ENCODE measurements at regions of chr20 and their contacts with region 1.

Region 1: DNA sequence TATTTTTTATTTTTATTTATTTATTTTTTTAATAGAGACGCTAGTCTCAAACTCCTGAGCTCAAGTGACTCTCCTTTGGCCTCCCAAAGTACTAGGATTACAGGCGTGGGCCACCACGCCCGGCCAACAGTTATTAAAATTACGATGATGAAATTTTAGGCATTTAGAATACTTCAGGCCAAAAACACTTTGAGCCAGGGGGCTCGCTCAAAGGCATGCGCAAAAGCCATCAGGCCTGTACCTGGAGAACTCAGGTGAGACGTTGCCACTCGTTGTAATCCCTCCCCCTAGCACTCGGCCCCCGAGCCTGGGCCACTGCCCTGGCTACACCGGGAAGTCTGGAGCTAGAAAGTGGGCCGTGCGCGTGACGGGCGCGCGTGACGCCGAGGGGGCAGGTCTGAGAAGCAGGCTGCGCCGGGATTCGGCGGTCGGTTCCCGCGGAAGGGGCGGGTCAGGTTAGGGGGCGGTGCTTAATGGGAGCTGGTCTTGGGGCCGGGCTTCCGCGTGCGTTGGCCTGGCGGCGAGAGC is 337 bp upstream of the CBFA2T2 start:
- DNase-seq: peak; percentile 99
- ATAC-seq: peak; percentile 97
- H3K4me3 ChIP-seq: peak overlapping the region; percentile 24 to 73 (median 68)
- H3K4me3 Mint-ChIP-seq: peak overlapping the region; percentile 93
- H3K27ac ChIP-seq: peak overlapping the region; percentile 97 to 99
- H3K27ac Mint-ChIP-seq: peak overlapping the region; percentile 95
- H3K4me1 ChIP-seq: peaks cover 9 to 19% of the 10 kb centered on the region in 2 donors
- H3K4me1 Mint-ChIP-seq: peaks cover 16% of the 10 kb centered on the region
- H3K27me3 ChIP-seq: no peaks in the 10 kb centered on the region
- H3K27me3 Mint-ChIP-seq: no peaks in the 10 kb centered on the region
- CTCF ChIP-seq: no peak

Region 2: GRCh38 chr20:33408716-33409654 is 80.6 kb before region 1 on chr20:
- CTCF ChIA-PET with region 1: no interaction called
- POLR2A ChIA-PET with region 1: interaction called, 3 read pairs
- intact Hi-C with region 1: loop called (anchors 1 kb)
- DNase-seq: peak; percentile 83
- ATAC-seq: peak; percentile 90
- H3K4me3 ChIP-seq: peak overlapping the region in 3 of 5 experiments; percentile 25 to 35 (median 29)
- H3K4me3 Mint-ChIP-seq: peak overlapping the region; percentile 81
- H3K27ac ChIP-seq: peak overlapping the region; percentile 57 to 75
- H3K27ac Mint-ChIP-seq: peak overlapping the region; percentile 96
- H3K4me1 ChIP-seq: peaks cover 26 to 43% of the 10 kb centered on the region in 2 donors
- H3K4me1 Mint-ChIP-seq: peaks cover 46% of the 10 kb centered on the region
- H3K27me3 ChIP-seq: no peaks in the 10 kb centered on the region
- H3K27me3 Mint-ChIP-seq: no peaks in the 10 kb centered on the region
- CTCF ChIP-seq: no peak

Region 3: DNA sequence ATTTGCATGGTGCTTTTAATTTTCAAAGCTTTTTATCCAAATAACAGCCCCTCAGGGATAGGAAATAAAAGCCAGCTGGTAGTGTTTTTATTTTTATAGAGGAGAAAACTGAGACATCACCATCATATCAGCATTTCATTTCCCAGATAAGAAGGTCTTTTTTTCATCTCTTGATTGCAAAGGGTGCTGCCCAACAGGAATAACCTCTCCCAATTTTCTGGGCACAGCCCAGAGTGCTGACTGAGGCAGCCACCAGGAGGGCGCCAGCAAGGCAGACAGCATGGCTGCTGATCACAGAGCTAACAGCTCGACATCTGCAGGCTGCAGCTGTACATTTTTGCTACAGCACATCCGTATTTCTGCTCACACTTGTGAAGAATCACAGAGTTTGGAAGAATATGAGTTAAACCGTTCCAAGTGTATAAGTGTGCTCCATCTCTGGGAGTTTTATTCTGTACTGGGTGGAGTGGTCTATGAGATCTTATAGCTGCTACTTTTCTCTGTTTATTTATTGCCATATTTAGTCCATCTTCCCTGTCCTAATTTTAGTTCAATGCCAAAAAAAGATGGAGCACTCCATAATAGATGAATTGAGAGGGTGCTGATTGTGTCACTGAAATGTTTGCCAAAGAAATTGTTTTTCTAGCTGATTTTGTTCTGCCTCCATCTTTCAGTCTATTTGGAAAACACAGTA is 87.0 kb after region 1 on chr20:
- CTCF ChIA-PET with region 1: interaction called, 3 read pairs
- POLR2A ChIA-PET with region 1: interaction called, 13 read pairs
- intact Hi-C with region 1: no loop called
- DNase-seq: no peak
- ATAC-seq: no peak
- H3K4me3 ChIP-seq: no peak overlapping the region
- H3K4me3 Mint-ChIP-seq: no peak overlapping the region
- H3K27ac ChIP-seq: no peak overlapping the region
- H3K27ac Mint-ChIP-seq: no peak overlapping the region
- H3K4me1 ChIP-seq: peaks cover 6 to 11% of the 10 kb centered on the region in 2 donors
- H3K4me1 Mint-ChIP-seq: peaks cover 25% of the 10 kb centered on the region
- H3K27me3 ChIP-seq: no peaks in the 10 kb centered on the region
- H3K27me3 Mint-ChIP-seq: no peaks in the 10 kb centered on the region
- CTCF ChIP-seq: no peak

Region 4: DNA sequence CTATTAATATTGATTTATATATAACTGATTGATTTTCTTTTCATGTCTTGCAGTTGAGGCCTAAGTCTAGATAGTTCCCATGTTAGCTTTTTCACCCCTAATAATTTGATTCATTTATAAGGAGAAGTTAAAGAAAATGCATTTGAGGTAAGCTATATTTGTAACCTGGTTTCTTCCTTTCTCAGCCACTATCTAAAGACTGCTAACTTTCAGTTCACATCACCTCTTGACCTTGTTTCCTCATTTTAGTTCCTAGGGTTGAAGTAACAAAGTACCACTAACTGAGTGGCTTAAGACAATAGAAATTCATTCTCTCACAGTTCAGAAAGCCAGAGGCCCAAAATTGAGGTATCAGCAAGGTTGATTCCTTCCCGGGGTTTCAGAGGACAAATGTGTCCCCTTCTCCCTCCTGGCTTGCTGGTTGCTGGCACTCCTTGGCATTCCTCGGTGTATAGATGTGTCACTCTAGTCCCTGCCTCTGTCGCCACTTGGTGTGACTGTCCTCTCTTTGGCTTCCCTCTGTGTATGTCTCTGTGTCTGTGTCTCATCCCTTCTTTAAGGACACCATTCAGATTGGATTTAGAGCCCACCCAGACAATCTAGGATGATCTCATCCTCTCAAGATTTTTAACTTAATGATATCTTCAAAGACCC is 116.7 kb after region 1 on chr20:
- CTCF ChIA-PET with region 1: no interaction called
- POLR2A ChIA-PET with region 1: no interaction called
- intact Hi-C with region 1: loop called (anchors 10 kb)
- DNase-seq: peak; percentile 63
- ATAC-seq: peak; percentile 53
- H3K4me3 ChIP-seq: no peak overlapping the region
- H3K4me3 Mint-ChIP-seq: peak overlapping the region; percentile 62
- H3K27ac ChIP-seq: peak overlapping the region; percentile 56 to 88
- H3K27ac Mint-ChIP-seq: peak overlapping the region; percentile 92
- H3K4me1 ChIP-seq: peaks cover 72 to 82% of the 10 kb centered on the region in 2 donors
- H3K4me1 Mint-ChIP-seq: peaks cover 74% of the 10 kb centered on the region
- H3K27me3 ChIP-seq: no peaks in the 10 kb centered on the region
- H3K27me3 Mint-ChIP-seq: no peaks in the 10 kb centered on the region
- CTCF ChIP-seq: no peak

Region 5: GRCh38 chr20:33711446-33711738 is 221.8 kb after region 1 on chr20:
- CTCF ChIA-PET with region 1: no interaction called
- POLR2A ChIA-PET with region 1: no interaction called
- intact Hi-C with region 1: no loop called
- DNase-seq: no peak
- ATAC-seq: no peak
- H3K4me3 ChIP-seq: no peak overlapping the region
- H3K4me3 Mint-ChIP-seq: no peak overlapping the region
- H3K27ac ChIP-seq: no peak overlapping the region
- H3K27ac Mint-ChIP-seq: no peak overlapping the region
- H3K4me1 ChIP-seq: peaks cover 0 to 4% of the 10 kb centered on the region in 2 donors
- H3K4me1 Mint-ChIP-seq: peaks cover 2% of the 10 kb centered on the region
- H3K27me3 ChIP-seq: no peaks in the 10 kb centered on the region
- H3K27me3 Mint-ChIP-seq: no peaks in the 10 kb centered on the region
- CTCF ChIP-seq: no peak